Activated CD4-positive, alpha-beta T cell treated with anti-CD3 and anti-CD28 coated beads for 36 hours (primary cell): ENCODE measurements at regions of chr1 and their contacts with region 1.

Region 1: GRCh38 chr1:112027696-112028095 is 38.2 kb upstream of the KCND3 start:
- DNase-seq: no peak
- ATAC-seq: no peak
- H3K4me3 Mint-ChIP-seq: no peak overlapping the region
- H3K27ac Mint-ChIP-seq: no peak overlapping the region
- H3K4me1 Mint-ChIP-seq: no peaks in the 10 kb centered on the region
- H3K27me3 Mint-ChIP-seq: peaks cover 4% of the 10 kb centered on the region

Region 2: DNA sequence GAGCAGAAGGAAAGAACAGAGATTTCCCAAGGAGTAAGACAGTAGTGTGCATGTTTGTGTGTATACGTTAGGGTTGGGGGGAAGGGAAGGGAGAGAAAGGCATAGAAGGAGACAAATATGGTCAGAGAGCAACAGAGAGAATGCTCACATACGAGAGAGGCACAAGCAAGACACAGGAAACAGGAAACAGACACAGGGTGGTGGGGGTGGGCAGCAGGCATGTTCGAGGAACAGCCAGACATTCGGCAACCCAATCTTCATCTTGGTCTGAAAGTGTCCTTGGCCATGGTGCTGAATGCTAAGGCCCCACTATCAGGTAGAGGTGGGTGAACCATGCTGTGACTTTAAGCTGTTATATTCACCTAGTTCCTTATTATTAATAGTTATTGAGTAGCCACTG is 162.9 kb before region 1 on chr1:
- CTCF ChIA-PET with region 1: no interaction called
- POLR2A ChIA-PET with region 1: no interaction called
- intact Hi-C with region 1: no loop called
- DNase-seq: peak; percentile 18
- ATAC-seq: no peak
- H3K4me3 Mint-ChIP-seq: no peak overlapping the region
- H3K27ac Mint-ChIP-seq: no peak overlapping the region
- H3K4me1 Mint-ChIP-seq: peaks cover 5% of the 10 kb centered on the region
- H3K27me3 Mint-ChIP-seq: peaks cover 13% of the 10 kb centered on the region

Region 3: DNA sequence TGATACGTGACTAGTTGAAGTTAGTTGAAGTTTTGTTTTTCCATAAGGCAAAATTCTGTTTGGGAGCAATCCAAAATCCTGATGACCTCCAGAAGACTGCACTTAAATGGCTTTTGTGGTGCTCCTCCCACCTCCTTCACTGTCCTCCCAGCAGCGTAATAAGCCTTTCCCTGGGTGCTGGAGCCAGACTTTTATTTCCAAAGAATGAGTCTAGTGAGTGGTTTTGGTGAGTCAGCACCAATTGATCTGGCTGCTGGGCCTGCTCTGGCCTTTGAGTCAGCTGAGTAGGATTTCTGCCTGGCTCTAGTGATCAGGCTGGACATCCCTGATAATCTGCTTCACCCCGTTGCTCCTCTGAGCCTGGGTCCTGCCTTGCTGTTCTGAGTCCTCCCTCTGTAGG is 16.5 kb before region 1 on chr1:
- CTCF ChIA-PET with region 1: no interaction called
- POLR2A ChIA-PET with region 1: no interaction called
- intact Hi-C with region 1: loop called in 1 of 2 experiments (anchors 2 kb)
- DNase-seq: no peak
- ATAC-seq: no peak
- H3K4me3 Mint-ChIP-seq: no peak overlapping the region
- H3K27ac Mint-ChIP-seq: no peak overlapping the region
- H3K4me1 Mint-ChIP-seq: no peaks in the 10 kb centered on the region
- H3K27me3 Mint-ChIP-seq: peaks cover 5% of the 10 kb centered on the region

Region 4: DNA sequence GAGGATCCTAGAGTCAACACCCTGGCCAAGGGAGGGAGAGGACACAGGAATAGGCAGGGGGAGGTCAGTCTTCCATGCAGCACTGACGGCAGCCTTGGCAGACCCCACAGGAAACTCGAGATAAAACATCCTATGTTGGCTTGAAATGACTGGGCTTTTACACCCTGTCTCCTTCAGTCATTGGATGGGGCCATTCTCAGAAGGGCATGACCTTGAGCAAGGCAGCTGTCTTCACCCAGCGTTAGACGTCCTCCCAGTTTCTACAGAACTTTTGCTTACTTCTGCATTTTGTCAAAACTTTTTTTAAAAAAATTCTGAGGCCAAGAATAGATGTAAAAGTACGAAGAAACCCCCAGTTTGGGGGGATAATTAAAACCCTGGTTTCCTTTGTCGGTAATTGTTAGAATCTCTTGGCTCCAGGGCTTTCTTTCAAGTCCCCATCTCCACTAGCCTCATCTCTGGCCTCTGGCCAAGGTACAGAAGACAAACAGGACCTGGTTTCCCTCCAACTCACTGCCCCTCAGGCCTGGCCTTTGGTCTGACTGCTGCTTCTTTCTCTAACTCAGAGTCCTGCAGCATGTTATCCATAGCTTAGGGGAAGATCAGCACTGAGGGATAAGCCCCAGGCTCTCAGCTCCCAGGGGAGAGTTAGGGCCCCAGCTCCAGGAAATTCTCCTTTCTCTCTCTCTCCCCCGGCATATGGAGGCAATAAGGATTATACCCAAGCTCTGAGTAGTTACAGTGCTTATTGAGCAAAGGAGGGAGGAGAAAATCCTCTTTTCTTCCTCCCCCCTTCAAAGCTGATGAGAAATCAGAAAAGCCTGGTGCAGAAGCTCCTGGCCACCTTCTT is 13.4 kb after region 1 on chr1:
- CTCF ChIA-PET with region 1: no interaction called
- POLR2A ChIA-PET with region 1: no interaction called
- intact Hi-C with region 1: no loop called
- DNase-seq: no peak
- ATAC-seq: no peak
- H3K4me3 Mint-ChIP-seq: no peak overlapping the region
- H3K27ac Mint-ChIP-seq: no peak overlapping the region
- H3K4me1 Mint-ChIP-seq: no peaks in the 10 kb centered on the region
- H3K27me3 Mint-ChIP-seq: peaks cover 20% of the 10 kb centered on the region